Caco-2 (cell line): ENCODE measurements at regions of chr7 and their contacts with region 1.

Region 1: DNA sequence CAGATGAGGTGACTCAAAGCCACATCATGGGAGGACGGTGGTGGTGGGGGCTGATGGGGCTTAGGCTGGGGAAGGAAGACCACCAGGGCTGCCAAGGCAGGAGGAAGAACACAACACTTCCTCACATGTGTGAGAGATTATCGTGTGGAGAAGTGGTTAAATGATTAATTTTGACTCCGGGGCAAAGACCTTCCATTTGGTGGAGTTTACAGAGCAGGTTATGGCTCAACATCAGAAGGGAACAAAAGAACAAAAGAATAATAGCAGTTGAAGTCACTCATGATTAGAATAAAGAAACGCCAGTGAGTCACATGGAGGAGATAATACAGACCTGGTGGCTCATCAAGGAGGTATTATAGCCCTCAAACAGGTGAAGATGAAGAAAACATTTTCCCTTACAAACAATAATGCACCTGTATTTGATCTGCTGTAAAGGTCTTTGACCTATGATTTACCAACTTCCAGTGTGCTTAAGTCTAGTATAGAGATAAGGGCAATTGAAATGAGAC is 170.1 kb downstream of the PKD1L1 start:
- DNase-seq: peak in 1 of 2 experiments; percentile 63
- H3K4me3 ChIP-seq: no peak overlapping the region
- H3K4me3 Mint-ChIP-seq: no peak overlapping the region
- H3K27ac Mint-ChIP-seq: peak overlapping the region; percentile 71
- H3K4me1 ChIP-seq: peaks cover 83% of the 10 kb centered on the region
- H3K4me1 Mint-ChIP-seq: peaks cover 75% of the 10 kb centered on the region
- H3K27me3 ChIP-seq: no peaks in the 10 kb centered on the region
- H3K27me3 Mint-ChIP-seq: no peaks in the 10 kb centered on the region
- CTCF ChIP-seq: no peak

Region 2: GRCh38 chr7:47266131-47266706 is 512.0 kb before region 1 on chr7:
- CTCF ChIA-PET with region 1: no interaction called
- POLR2A ChIA-PET with region 1: no interaction called
- intact Hi-C with region 1: no loop called
- DNase-seq: peak; percentile 82 to 85
- H3K4me3 ChIP-seq: no peak overlapping the region
- H3K4me3 Mint-ChIP-seq: no peak overlapping the region
- H3K27ac Mint-ChIP-seq: peak overlapping the region; percentile 31
- H3K4me1 ChIP-seq: peaks cover 25% of the 10 kb centered on the region
- H3K4me1 Mint-ChIP-seq: peaks cover 17% of the 10 kb centered on the region
- H3K27me3 ChIP-seq: no peaks in the 10 kb centered on the region
- H3K27me3 Mint-ChIP-seq: no peaks in the 10 kb centered on the region
- CTCF ChIP-seq: peak; percentile 89 to 96

Region 3: DNA sequence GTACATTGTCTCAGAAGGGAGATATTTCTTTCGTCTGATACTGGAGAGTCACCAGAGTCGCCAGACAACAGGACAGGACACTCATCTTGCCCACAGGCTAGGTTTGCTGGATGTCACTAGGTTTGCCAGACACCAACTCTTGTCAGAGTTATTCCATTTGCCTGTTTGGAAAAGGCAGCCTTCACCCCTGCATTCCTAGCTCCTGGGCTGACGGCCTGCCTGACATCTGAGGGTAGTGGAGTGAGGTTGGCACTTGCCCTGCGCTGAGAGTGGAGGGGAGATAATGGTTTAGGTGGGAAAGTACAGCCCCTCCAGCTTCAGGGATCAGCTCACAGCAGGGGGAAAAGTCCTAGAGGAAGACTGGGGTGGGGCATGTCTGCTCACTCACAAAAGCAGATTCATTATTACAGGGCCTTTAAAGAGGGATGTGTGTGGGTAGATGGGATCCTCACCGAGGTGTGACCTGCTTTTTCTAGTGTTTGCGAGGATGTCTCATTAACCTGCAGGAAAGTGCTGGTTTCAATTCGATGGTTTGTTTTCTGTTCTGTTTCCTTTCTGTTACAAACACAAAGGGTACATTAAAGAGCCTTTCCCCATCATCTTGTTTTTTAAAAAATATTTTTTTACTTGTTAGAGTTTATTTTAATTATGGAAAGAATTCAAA is 117.0 kb before region 1 on chr7:
- CTCF ChIA-PET with region 1: no interaction called
- POLR2A ChIA-PET with region 1: no interaction called
- intact Hi-C with region 1: loop called (anchors 5 kb)
- DNase-seq: no peak
- H3K4me3 ChIP-seq: no peak overlapping the region
- H3K4me3 Mint-ChIP-seq: no peak overlapping the region
- H3K27ac Mint-ChIP-seq: peak overlapping the region; percentile 55
- H3K4me1 ChIP-seq: peaks cover 52% of the 10 kb centered on the region
- H3K4me1 Mint-ChIP-seq: peaks cover 30% of the 10 kb centered on the region
- H3K27me3 ChIP-seq: no peaks in the 10 kb centered on the region
- H3K27me3 Mint-ChIP-seq: no peaks in the 10 kb centered on the region
- CTCF ChIP-seq: no peak

Region 4: GRCh38 chr7:47698231-47698785 is 79.9 kb before region 1 on chr7:
- CTCF ChIA-PET with region 1: no interaction called
- POLR2A ChIA-PET with region 1: no interaction called
- intact Hi-C with region 1: no loop called
- DNase-seq: no peak
- H3K4me3 ChIP-seq: no peak overlapping the region
- H3K4me3 Mint-ChIP-seq: no peak overlapping the region
- H3K27ac Mint-ChIP-seq: no peak overlapping the region
- H3K4me1 ChIP-seq: peaks cover 17% of the 10 kb centered on the region
- H3K4me1 Mint-ChIP-seq: peaks cover 11% of the 10 kb centered on the region
- H3K27me3 ChIP-seq: no peaks in the 10 kb centered on the region
- H3K27me3 Mint-ChIP-seq: no peaks in the 10 kb centered on the region
- CTCF ChIP-seq: no peak